Heart right ventricle (tissue), 16 donors: ENCODE measurements at regions of chr9 and their contacts with region 1.

Region 1: DNA sequence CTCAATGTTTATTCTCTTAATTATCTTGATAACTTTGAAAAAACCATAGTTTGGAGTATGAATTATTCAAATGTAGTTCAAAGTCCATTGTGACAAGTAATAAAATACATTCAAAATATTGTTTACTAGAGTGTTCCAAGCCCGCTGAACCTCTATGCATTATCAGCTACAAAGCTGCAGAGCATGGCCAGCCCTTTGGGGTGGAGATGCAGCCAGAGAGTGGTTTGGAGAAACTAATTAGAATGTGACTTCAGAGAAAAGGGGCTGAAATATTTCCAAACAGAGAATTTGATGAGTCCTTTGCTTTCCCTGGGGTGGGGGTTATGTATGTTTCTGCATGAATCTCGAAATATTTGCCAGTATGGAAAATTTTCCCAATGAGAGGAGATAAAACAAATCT is 211.3 kb downstream of the NTRK2 start:
- DNase-seq: no peak
- ATAC-seq: no peak
- H3K4me3 ChIP-seq: no peak overlapping the region
- H3K27ac ChIP-seq: no peak overlapping the region
- H3K4me1 ChIP-seq: no peaks in the 10 kb centered on the region
- H3K27me3 ChIP-seq: no peaks in the 10 kb centered on the region
- CTCF ChIP-seq: no peak

Region 2: GRCh38 chr9:84823421-84824271 is 57.2 kb before region 1 on chr9:
- intact Hi-C with region 1: loop called in 1 of 10 experiments (anchors 10 kb)
- DNase-seq: peak in 1 of 2 donors; percentile 12
- ATAC-seq: peak in 7 of 8 donors; percentile 48 to 79 (median 68)
- H3K4me3 ChIP-seq: no peak overlapping the region
- H3K27ac ChIP-seq: peak overlapping the region in 3 of 10 donors; percentile 22 to 31 (median 25)
- H3K4me1 ChIP-seq: peaks cover 0 to 40% (median 5%) of the 10 kb centered on the region in 9 donors
- H3K27me3 ChIP-seq: no peaks in the 10 kb centered on the region
- CTCF ChIP-seq: no peak

Region 3: DNA sequence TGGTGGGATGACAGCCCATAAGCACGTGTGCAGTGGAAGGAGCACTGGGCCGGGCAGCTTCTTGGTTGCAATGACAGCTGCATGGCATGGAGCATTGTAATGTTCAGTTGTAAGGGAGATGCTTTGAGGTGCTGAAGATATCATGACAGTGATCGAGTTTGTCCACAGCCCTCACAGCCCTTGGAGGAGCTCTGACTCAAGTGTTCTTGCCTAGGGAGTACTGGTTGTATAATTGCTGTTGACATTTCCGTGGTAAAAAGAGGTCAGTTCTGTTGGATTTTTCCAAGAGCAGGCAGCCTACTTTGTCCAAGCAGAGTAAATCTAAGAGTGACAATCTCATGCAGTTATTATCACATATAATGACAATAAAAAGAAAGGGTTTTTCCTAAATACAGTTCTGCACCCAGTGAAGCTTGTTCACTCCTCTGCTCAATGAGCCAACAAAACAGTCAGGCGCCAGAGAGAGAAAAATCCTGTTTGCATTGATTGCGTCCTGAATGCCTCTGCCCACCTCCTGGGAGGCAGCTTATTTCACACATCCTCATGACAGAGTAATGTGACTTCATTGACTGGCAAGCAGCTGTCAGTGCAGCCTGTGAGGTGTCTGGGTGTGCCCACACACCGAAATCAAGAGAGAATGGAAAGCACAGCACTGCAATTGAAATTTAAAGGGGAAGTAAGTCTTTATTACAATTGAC is 36.7 kb after region 1 on chr9:
- intact Hi-C with region 1: no loop called
- DNase-seq: no peak
- ATAC-seq: peak in 1 of 8 donors; percentile 62
- H3K4me3 ChIP-seq: no peak overlapping the region
- H3K27ac ChIP-seq: no peak overlapping the region
- H3K4me1 ChIP-seq: no peaks in the 10 kb centered on the region
- H3K27me3 ChIP-seq: no peaks in the 10 kb centered on the region
- CTCF ChIP-seq: no peak